T-cell (primary cell): ENCODE measurements at regions of chr2 and their contacts with region 1.

Region 1: DNA sequence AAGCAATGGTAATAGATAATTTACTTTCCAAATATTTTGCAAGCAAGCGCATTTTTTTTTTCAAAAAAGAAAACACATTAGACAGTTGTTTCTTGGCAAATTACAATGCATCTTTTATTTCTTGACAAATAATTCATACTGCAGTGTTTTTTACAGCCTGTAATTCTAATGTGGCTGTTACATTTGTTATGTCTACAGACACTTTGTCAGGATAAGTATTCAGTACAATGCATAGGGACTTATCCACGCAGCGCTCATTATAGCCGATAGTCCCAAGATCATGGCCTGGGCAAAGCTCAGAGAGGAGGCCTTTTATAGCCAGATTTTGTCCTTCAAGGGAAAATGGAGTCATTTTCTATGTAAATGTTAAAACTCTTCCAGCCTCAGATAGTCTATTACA is 123.0 kb upstream of the FANCL start:
- DNase-seq: no peak
- ATAC-seq: no peak
- H3K4me3 ChIP-seq: no peak overlapping the region
- H3K4me3 Mint-ChIP-seq: no peak overlapping the region
- H3K27ac ChIP-seq: no peak overlapping the region
- H3K27ac Mint-ChIP-seq: no peak overlapping the region
- H3K4me1 ChIP-seq: no peaks in the 10 kb centered on the region
- H3K4me1 Mint-ChIP-seq: no peaks in the 10 kb centered on the region
- H3K27me3 ChIP-seq: no peaks in the 10 kb centered on the region
- H3K27me3 Mint-ChIP-seq: peaks cover 0 to 4% of the 10 kb centered on the region in 2 donors

Region 2: DNA sequence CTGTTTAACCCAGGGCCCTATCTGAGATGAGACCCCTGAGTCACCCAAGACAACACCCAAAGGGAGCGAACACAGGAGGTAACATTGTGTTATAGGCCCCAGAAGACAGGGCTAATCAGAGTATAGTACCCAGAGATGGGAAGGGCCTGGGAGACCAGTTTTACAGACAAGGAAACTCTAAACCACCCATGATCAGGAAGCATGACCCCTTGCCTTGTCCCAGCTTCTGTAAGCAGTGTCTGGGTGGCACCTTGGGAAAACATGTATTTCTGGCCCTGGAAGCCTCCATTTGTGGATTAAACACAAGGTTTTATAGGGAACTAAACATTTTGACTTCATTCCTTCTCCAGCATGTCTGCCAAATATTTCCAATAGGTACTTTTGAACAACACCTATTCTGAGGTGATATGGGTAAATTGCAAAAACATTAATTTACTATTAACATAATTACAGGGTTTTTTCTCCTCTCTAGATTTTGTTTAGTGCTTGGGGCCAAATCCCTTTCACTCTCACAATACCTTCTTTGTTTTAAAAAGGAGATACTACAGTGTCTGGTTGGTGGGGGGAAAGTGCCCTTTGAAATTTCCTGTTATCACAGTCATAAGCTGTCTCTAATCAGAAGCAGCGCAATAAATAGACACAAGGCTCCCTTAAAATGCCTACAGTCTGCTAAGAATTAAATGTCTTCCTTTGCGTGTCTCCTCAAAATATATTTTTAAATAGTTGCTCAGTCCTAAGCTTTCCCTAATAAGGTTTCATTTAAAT is 1848.3 kb after region 1 on chr2:
- CTCF ChIA-PET with region 1: no interaction called
- POLR2A ChIA-PET with region 1: interaction called in 1 of 2 experiments, 10 read pairs
- DNase-seq: no peak
- ATAC-seq: no peak
- H3K4me3 ChIP-seq: no peak overlapping the region
- H3K4me3 Mint-ChIP-seq: no peak overlapping the region
- H3K27ac ChIP-seq: no peak overlapping the region
- H3K27ac Mint-ChIP-seq: no peak overlapping the region
- H3K4me1 ChIP-seq: no peaks in the 10 kb centered on the region
- H3K4me1 Mint-ChIP-seq: peaks cover 0 to 6% (median 0%) of the 10 kb centered on the region in 3 donors
- H3K27me3 ChIP-seq: no peaks in the 10 kb centered on the region
- H3K27me3 Mint-ChIP-seq: peaks cover 0 to 6% of the 10 kb centered on the region in 2 donors